Right ventricle myocardium inferior (tissue), 1 donor: ENCODE measurements at regions of chr6 and their contacts with region 1.

Region 1: GRCh38 chr6:144013486-144013909 is 5.4 kb upstream of the PLAGL1 start:
- DNase-seq: peak; percentile 88
- ATAC-seq: peak; percentile 37

Region 2: GRCh38 chr6:143941852-143942627 is 71.5 kb before region 1 on chr6:
- intact Hi-C with region 1: loop called (anchors 2 kb)
- DNase-seq: peak; percentile 74
- ATAC-seq: peak; percentile 31

Region 3: GRCh38 chr6:143961886-143962873 is 51.3 kb before region 1 on chr6:
- intact Hi-C with region 1: loop called (anchors 5 kb)
- DNase-seq: no peak
- ATAC-seq: peak; percentile 32